Activated naive CD4-positive, alpha-beta T cell treated with anti-CD3 and anti-CD28 coated beads for 36 hours (primary cell): ENCODE measurements at regions of chr3 and their contacts with region 1.

Region 1: GRCh38 chr3:142447852-142448823 is at the start of gene XRN1:
- DNase-seq: peak; percentile 97
- H3K4me3 Mint-ChIP-seq: peak within 1 kb of the TSS; percentile 98
- H3K27ac Mint-ChIP-seq: peak within 1 kb of the TSS; percentile 100
- H3K4me1 Mint-ChIP-seq: peaks cover 27% of the 10 kb centered on the region
- H3K27me3 Mint-ChIP-seq: no peaks in the 10 kb centered on the region
- total RNA-seq, gene XRN1: 63.9 to 64.5 TPM

Region 2: GRCh38 chr3:140941434-140942220 is 1506.5 kb before region 1 on chr3 and contains the start of gene SLC25A36:
- CTCF ChIA-PET with region 1: no interaction called
- intact Hi-C with region 1: loop called (anchors 5 kb)
- DNase-seq: peak; percentile 99
- H3K4me3 Mint-ChIP-seq: peak within 1 kb of the TSS; percentile 89
- H3K27ac Mint-ChIP-seq: peak within 1 kb of the TSS; percentile 88
- H3K4me1 Mint-ChIP-seq: peaks cover 35% of the 10 kb centered on the region
- H3K27me3 Mint-ChIP-seq: no peaks in the 10 kb centered on the region
- total RNA-seq, gene SLC25A36: 48.7 to 50.1 TPM

Region 3: DNA sequence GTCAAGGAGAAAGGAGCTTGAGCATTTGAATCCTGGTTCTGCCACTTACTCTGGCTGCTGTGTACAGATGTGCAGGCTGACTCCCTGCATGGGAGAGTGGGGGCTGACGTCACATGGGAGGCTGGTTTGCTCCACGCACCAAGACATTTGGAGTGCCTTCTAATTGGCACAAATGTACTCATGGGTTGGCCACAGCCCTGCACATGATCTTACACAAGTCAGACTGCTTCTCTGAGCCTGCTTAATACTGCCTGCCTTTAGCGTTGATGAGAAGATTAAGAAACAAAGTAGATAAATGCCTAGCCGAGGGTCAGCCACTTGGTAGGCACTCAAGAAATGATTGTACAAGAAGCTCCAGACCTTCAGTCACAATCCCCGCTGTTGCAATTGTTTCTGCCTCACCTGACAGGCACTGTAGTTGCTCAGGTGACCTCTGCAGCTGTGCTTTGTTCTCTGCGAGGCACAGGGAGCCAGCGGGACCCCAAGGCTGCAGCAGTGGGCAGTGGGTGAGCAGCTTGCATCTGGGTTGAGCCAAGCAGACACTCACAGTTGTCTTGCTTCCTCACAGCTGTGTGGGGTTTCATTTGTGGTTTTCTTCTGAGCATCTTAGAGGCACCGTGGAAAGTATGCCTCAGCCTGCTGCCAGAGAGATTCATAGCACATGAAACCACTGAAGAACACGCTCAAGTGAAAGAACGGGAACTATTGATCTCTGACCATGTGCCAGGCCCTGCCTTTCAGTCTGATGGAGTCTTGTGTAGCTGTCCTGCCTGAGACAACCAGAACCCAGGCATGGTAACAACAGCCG is 651.9 kb before region 1 on chr3:
- CTCF ChIA-PET with region 1: no interaction called
- intact Hi-C with region 1: loop called (anchors 1 kb)
- DNase-seq: peak; percentile 90
- H3K4me3 Mint-ChIP-seq: peak overlapping the region; percentile 74
- H3K27ac Mint-ChIP-seq: peak overlapping the region; percentile 89
- H3K4me1 Mint-ChIP-seq: peaks cover 46% of the 10 kb centered on the region
- H3K27me3 Mint-ChIP-seq: no peaks in the 10 kb centered on the region

Region 4: GRCh38 chr3:142148792-142149672 is 299.1 kb before region 1 on chr3 and contains the start of gene TFDP2:
- CTCF ChIA-PET with region 1: no interaction called
- intact Hi-C with region 1: loop called (anchors 1 kb)
- DNase-seq: peak; percentile 89
- H3K4me3 Mint-ChIP-seq: peak within 1 kb of the TSS; percentile 84
- H3K27ac Mint-ChIP-seq: no peak within 1 kb of the TSS
- H3K4me1 Mint-ChIP-seq: peaks cover 24% of the 10 kb centered on the region
- H3K27me3 Mint-ChIP-seq: no peaks in the 10 kb centered on the region
- total RNA-seq, gene TFDP2: 23.0 to 25.0 TPM

Region 5: DNA sequence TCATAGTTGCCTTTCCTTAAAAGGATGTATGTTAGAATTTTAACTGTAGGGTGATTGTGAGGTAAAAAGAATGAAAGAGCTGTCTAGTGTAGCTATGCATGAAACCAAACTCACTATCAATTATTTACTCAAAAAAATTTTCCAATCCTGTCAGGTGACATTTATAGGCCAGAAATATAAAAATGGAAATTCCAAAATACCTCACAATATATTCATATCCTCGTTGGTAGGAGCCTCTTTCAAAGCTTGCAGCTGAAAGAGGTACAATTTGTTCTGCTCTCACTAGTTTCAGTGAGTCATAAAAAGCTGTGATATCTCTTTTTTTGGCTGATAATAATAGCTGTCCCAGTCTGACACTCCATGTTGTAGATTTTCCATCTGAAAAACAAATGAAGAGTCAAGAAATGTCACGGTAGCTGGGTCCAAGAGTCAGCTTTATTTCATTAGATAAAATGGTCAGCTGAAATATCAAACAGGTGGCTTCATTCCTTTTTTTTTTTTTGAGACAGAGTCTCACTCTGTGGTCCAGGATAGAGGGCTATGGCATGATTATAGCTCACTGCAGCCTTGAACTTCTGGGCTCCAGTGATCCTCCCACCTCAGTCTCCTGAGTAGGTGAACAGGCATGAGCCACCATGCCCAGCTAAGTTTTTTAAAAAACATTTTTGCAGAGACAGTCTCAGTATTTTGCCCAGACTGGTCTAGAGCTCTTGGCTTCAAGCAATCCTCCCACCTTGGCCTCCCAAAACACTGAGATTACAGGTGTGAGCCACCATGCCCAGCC is 50.5 kb after region 1 on chr3:
- CTCF ChIA-PET with region 1: interaction called, 3 read pairs
- intact Hi-C with region 1: loop called (anchors 1 kb)
- DNase-seq: no peak
- H3K4me3 Mint-ChIP-seq: peak overlapping the region; percentile 15
- H3K27ac Mint-ChIP-seq: peak overlapping the region; percentile 80
- H3K4me1 Mint-ChIP-seq: peaks cover 35% of the 10 kb centered on the region
- H3K27me3 Mint-ChIP-seq: no peaks in the 10 kb centered on the region

Region 6: DNA sequence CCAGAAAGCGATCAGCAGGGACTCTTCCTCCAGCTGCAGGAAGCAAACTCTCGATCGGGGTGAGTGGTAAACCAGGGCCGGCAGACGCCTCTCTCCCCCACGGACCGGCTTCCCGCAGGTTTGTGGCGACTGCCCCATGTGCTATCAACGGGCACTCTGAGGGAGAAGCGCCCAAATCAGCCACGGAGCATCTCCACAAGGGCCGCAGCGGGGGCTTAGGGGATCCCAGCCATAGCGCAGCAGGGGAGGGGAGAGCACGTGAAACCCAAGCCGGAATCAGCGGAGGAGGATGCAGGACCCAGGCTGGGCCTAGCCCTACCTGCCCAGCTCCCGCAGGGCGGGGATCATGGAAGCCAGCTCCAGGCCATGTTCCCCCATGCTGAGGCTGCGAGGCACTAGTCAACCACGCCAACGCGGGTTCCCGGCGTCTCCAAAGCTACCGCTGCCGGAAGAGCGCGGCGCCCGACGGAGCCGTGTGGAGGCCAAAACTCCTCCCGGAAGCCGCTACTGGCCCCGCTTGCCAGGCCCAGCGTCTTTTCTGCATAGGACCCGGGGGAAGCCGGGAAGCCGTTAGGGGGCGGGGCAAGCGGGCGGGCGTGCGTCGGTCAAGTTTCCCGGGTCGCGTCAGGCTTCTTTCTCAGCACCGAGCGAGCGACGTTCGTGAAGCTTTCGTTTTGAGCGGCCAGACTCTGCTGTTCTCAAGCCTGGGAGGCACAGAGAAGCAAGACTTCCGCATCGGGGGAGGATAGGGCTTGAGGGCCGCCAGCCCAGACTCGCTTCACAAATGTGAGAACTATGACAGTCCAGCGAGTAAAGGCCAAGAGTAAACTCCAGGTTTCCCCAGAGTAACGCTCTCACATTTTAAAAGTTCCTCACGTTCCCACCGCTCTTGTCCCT is 130.4 kb after region 1 on chr3 and contains the start of gene ATR:
- CTCF ChIA-PET with region 1: no interaction called
- intact Hi-C with region 1: loop called (anchors 1 kb)
- DNase-seq: peak; percentile 98
- H3K4me3 Mint-ChIP-seq: peak within 1 kb of the TSS; percentile 94
- H3K27ac Mint-ChIP-seq: peak within 1 kb of the TSS; percentile 95
- H3K4me1 Mint-ChIP-seq: peaks cover 41% of the 10 kb centered on the region
- H3K27me3 Mint-ChIP-seq: no peaks in the 10 kb centered on the region
- total RNA-seq, gene ATR: 42.5 to 43.1 TPM

Region 7: GRCh38 chr3:143171141-143171970 is 723.2 kb after region 1 on chr3:
- CTCF ChIA-PET with region 1: no interaction called
- intact Hi-C with region 1: loop called (anchors 5 kb)
- DNase-seq: peak; percentile 26
- H3K4me3 Mint-ChIP-seq: peak overlapping the region; percentile 7
- H3K27ac Mint-ChIP-seq: peak overlapping the region; percentile 82
- H3K4me1 Mint-ChIP-seq: peaks cover 67% of the 10 kb centered on the region
- H3K27me3 Mint-ChIP-seq: no peaks in the 10 kb centered on the region